H1 (cell line): ENCODE measurements at regions of chr10 and their contacts with region 1.

Region 1: GRCh38 chr10:71486484-71487114 is 89.9 kb downstream of the CDH23 start:
- DNase-seq: peak in 1 of 2 experiments; percentile 93
- H3K4me3 ChIP-seq: no peak overlapping the region
- H3K27ac ChIP-seq: no peak overlapping the region
- H3K4me1 ChIP-seq: peaks cover 0 to 6% (median 1%) of the 10 kb centered on the region in 4 experiments; a peak in 3 of 7 replicates
- H3K27me3 ChIP-seq: no peaks in the 10 kb centered on the region
- CTCF ChIP-seq: peak; percentile 92 to 99 (median 96)
- EP300 ChIP-seq: no peak
- POLR2A ChIP-seq: no peak
- RAD21 ChIP-seq: peak; percentile 92 to 94

Region 2: DNA sequence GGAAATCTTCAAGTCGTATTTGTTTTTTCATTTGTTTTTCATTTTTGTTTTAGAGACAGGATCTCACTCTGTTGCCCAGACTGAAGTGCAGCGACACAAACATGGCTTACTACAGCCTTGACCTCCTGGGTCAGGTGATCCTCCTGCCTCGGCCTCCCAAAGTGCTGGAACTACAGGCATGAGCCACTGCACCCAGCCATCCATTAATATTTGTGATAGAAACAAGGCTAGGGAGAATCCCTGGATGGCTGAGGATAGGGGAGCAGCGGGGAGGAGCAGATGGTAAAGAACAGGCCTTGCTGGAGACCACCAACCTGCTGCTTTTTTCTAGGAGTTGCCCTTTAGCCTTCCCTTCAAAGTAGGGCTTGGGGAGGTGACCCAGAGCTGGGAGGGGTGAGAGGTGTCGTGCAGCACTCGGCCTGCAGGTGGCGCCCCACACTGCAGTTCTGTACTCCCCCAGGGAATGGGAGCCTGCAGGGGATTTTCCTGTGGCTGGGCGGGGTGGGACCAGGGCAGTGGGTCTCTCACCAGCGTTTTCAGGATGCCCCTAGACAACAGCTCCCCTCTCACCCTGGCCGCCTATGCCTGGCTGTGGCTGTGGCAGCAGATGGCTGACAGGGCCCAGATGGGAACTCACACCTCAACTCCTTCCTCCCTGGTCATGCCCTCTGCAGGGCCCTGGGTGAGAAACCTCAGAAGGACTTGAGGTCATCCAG is 102.5 kb before region 1 on chr10:
- CTCF ChIA-PET with region 1: interaction called, 15 read pairs
- POLR2A ChIA-PET with region 1: no interaction called
- DNase-seq: peak; percentile 58 to 99
- H3K4me3 ChIP-seq: no peak overlapping the region
- H3K27ac ChIP-seq: no peak overlapping the region
- H3K4me1 ChIP-seq: no peaks in the 10 kb centered on the region
- H3K27me3 ChIP-seq: no peaks in the 10 kb centered on the region
- CTCF ChIP-seq: peak; percentile 93 to 96 (median 95)
- EP300 ChIP-seq: no peak
- POLR2A ChIP-seq: no peak
- RAD21 ChIP-seq: peak; percentile 91 to 92

Region 3: DNA sequence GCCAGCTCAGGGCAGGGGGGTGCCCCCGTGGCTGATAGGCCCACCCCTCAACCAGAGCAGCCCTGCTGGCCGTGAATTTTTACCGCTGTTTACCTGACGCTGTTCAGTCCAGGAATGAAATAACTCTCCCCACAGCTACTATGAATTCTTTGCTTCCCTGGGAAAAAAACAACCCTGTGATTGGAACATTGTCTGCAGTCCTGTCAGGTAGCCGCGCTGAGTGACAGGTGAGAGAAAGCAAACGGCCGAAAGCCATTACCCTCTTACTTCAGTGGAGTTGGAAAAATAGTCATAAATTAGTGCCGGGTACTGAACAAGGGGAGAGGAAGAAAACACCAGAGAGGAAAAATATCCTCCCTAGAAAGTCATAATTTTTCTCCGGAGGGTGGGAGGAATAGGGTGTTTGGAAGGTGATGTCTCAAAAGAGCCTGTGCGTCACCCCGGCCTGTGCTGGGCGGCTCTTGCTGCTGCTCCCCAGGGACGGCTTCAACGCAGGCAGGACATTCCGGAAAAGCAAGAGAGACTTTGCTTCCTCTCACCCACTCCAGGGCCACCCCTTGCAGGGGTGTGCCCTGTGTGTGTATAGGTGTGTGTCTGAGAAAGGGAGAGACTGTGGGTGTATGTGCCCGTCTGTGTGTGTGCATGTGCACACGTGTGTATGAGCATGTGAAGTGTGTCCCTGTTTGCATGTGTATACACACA is 20.9 kb before region 1 on chr10:
- CTCF ChIA-PET with region 1: interaction called, 15 read pairs
- POLR2A ChIA-PET with region 1: no interaction called
- DNase-seq: no peak
- H3K4me3 ChIP-seq: no peak overlapping the region
- H3K27ac ChIP-seq: no peak overlapping the region
- H3K4me1 ChIP-seq: peaks cover 0 to 2% (median 0%) of the 10 kb centered on the region in 4 experiments; a peak in 1 of 7 replicates
- H3K27me3 ChIP-seq: no peaks in the 10 kb centered on the region
- CTCF ChIP-seq: no peak
- EP300 ChIP-seq: no peak
- POLR2A ChIP-seq: no peak
- RAD21 ChIP-seq: no peak

Region 4: DNA sequence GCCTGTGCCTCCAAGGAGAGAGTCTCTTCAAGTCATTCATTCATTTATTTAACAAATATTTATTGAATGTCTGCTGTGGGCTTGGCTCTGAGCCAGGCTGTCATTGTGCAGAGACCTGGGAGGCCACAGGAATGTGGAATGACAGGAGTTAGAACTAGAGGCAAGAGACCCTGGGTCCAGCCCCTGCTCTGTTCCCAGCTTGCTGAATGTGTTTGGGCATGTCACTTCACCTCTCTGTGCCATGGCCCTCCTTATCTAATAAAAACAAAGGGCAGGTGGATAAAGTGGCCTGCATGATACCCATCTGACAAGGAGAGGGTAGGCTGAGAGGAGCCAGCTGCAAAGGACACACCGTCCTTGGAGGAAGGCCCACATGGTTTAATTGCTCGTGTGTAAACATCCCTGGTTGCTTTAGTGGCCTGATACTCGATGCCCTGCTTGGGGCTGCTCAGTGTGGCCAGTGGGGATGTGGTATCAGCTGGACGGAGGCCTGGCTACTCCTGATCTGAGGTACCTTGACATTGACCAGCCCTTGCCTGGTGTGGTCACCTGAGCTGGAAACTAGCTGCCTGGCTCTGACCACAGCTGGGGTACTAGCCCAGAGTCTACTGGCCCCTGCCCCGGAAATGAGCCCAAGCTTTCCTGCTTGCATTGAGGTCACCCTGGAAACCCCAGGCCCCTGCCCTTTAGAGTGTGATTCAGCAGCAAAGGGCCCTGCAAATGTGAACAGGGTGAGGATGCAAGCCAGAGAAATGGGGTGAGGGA is 26.4 kb after region 1 on chr10:
- CTCF ChIA-PET with region 1: interaction called, 12 read pairs
- POLR2A ChIA-PET with region 1: no interaction called
- DNase-seq: no peak
- H3K4me3 ChIP-seq: no peak overlapping the region
- H3K27ac ChIP-seq: no peak overlapping the region
- H3K4me1 ChIP-seq: peaks cover 0 to 5% (median 0%) of the 10 kb centered on the region in 4 experiments; a peak in 1 of 7 replicates
- H3K27me3 ChIP-seq: no peaks in the 10 kb centered on the region
- CTCF ChIP-seq: no peak
- EP300 ChIP-seq: no peak
- POLR2A ChIP-seq: no peak
- RAD21 ChIP-seq: no peak

Region 5: GRCh38 chr10:71666639-71667386 is 180.2 kb after region 1 on chr10:
- CTCF ChIA-PET with region 1: no interaction called
- POLR2A ChIA-PET with region 1: no interaction called
- DNase-seq: no peak
- H3K4me3 ChIP-seq: no peak overlapping the region
- H3K27ac ChIP-seq: no peak overlapping the region
- H3K4me1 ChIP-seq: peaks cover 5 to 10% (median 8%) of the 10 kb centered on the region in 4 experiments
- H3K27me3 ChIP-seq: no peaks in the 10 kb centered on the region; a peak in 1 of 7 replicates
- CTCF ChIP-seq: no peak
- EP300 ChIP-seq: no peak
- POLR2A ChIP-seq: no peak
- RAD21 ChIP-seq: no peak